CD8-positive, alpha-beta T cell (primary cell): ENCODE measurements at regions of chr11 and their contacts with region 1.

Region 1: GRCh38 chr11:101014600-101015285 is 114.9 kb downstream of the PGR start:
- DNase-seq: no peak
- ATAC-seq: no peak
- H3K4me3 ChIP-seq: no peak overlapping the region
- H3K4me3 Mint-ChIP-seq: no peak overlapping the region
- H3K27ac ChIP-seq: no peak overlapping the region
- H3K27ac Mint-ChIP-seq: no peak overlapping the region
- H3K4me1 ChIP-seq: no peaks in the 10 kb centered on the region
- H3K4me1 Mint-ChIP-seq: no peaks in the 10 kb centered on the region
- H3K27me3 ChIP-seq: no peaks in the 10 kb centered on the region
- H3K27me3 Mint-ChIP-seq: no peaks in the 10 kb centered on the region
- CTCF ChIP-seq: no peak

Region 2: GRCh38 chr11:101061606-101062005 is 46.9 kb after region 1 on chr11:
- CTCF ChIA-PET with region 1: no interaction called
- POLR2A ChIA-PET with region 1: no interaction called
- intact Hi-C with region 1: loop called in 1 of 2 experiments (anchors 5 kb)
- DNase-seq: no peak
- ATAC-seq: no peak
- H3K4me3 ChIP-seq: no peak overlapping the region
- H3K4me3 Mint-ChIP-seq: no peak overlapping the region
- H3K27ac ChIP-seq: no peak overlapping the region
- H3K27ac Mint-ChIP-seq: no peak overlapping the region
- H3K4me1 ChIP-seq: no peaks in the 10 kb centered on the region
- H3K4me1 Mint-ChIP-seq: no peaks in the 10 kb centered on the region
- H3K27me3 ChIP-seq: no peaks in the 10 kb centered on the region
- H3K27me3 Mint-ChIP-seq: no peaks in the 10 kb centered on the region
- CTCF ChIP-seq: no peak